Activated naive CD4-positive, alpha-beta T cell treated with anti-CD3 and anti-CD28 coated beads for 36 hours (primary cell): ENCODE measurements at regions of chr11 and their contacts with region 1.

Region 1: GRCh38 chr11:22875869-22876473 is 15.7 kb upstream of the CCDC179 start:
- DNase-seq: peak; percentile 83
- H3K4me3 Mint-ChIP-seq: no peak overlapping the region
- H3K27ac Mint-ChIP-seq: no peak overlapping the region
- H3K4me1 Mint-ChIP-seq: no peaks in the 10 kb centered on the region
- H3K27me3 Mint-ChIP-seq: no peaks in the 10 kb centered on the region

Region 2: GRCh38 chr11:22115470-22116029 is 760.4 kb before region 1 on chr11:
- CTCF ChIA-PET with region 1: no interaction called
- intact Hi-C with region 1: no loop called
- DNase-seq: no peak
- H3K4me3 Mint-ChIP-seq: no peak overlapping the region
- H3K27ac Mint-ChIP-seq: no peak overlapping the region
- H3K4me1 Mint-ChIP-seq: no peaks in the 10 kb centered on the region
- H3K27me3 Mint-ChIP-seq: no peaks in the 10 kb centered on the region

Region 3: GRCh38 chr11:23021287-23021863 is 145.4 kb after region 1 on chr11:
- CTCF ChIA-PET with region 1: no interaction called
- intact Hi-C with region 1: loop called (anchors 1 kb)
- DNase-seq: peak; percentile 14
- H3K4me3 Mint-ChIP-seq: no peak overlapping the region
- H3K27ac Mint-ChIP-seq: no peak overlapping the region
- H3K4me1 Mint-ChIP-seq: no peaks in the 10 kb centered on the region
- H3K27me3 Mint-ChIP-seq: no peaks in the 10 kb centered on the region

Region 4: GRCh38 chr11:23539556-23539955 is 663.6 kb after region 1 on chr11:
- CTCF ChIA-PET with region 1: interaction called, 3 read pairs
- intact Hi-C with region 1: loop called (anchors 10 kb)
- DNase-seq: no peak
- H3K4me3 Mint-ChIP-seq: no peak overlapping the region
- H3K27ac Mint-ChIP-seq: no peak overlapping the region
- H3K4me1 Mint-ChIP-seq: no peaks in the 10 kb centered on the region
- H3K27me3 Mint-ChIP-seq: no peaks in the 10 kb centered on the region